AG04450 (cell line): ENCODE measurements at regions of chr11 and their contacts with region 1.

Region 1: GRCh38 chr11:61639816-61640443 is 40.3 kb upstream of the DAGLA start:
- DNase-seq: no peak
- H3K4me3 ChIP-seq: no peak overlapping the region
- H3K27ac ChIP-seq: no peak overlapping the region
- H3K27me3 ChIP-seq: peaks cover 23% of the 10 kb centered on the region
- CTCF ChIP-seq: no peak

Region 2: GRCh38 chr11:61477727-61478148 is 162.2 kb before region 1 on chr11:
- CTCF ChIA-PET with region 1: interaction called, 56 read pairs
- POLR2A ChIA-PET with region 1: no interaction called
- DNase-seq: no peak
- H3K4me3 ChIP-seq: no peak overlapping the region
- H3K27ac ChIP-seq: no peak overlapping the region
- H3K27me3 ChIP-seq: peaks cover 15% of the 10 kb centered on the region
- CTCF ChIP-seq: peak; percentile 87

Region 3: DNA sequence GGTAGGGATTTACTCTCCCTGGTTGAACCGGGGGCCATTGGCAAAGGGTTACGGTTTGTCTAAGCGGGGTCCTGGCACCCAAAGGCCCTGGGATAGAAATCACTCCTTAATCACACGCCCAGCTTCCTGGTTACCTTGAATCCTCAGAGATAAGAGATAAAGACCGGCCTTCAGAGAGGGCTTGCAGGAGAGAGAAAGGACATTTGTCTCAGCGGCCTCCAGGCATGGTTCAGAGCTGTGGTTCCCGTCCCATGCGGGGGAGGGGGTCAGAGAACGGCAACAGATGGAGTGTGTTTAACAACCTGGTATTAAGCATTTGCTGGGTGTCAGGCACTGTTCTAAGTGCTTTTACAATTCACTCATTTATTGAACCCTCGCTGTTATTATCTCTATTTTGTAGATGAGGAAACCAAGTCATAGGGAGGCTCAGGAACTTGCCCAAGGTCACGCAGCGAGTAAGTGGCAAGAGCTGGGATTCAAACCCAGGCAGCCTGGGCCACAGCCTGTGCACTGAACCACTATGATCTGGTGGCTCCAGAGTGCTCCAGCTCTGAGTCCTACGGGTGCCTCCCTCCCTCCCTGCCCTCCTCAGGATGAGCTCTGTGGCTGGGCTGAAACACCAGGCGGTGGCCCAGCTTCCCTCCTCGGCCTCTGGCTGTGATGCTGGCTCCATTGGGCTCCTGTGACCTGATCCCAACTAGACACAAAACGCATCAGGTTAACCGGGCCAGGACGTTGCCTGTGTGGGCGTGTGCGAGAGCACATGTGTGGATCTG is 112.8 kb before region 1 on chr11:
- CTCF ChIA-PET with region 1: interaction called, 24 read pairs
- POLR2A ChIA-PET with region 1: no interaction called
- DNase-seq: no peak
- H3K4me3 ChIP-seq: no peak overlapping the region
- H3K27ac ChIP-seq: no peak overlapping the region
- H3K27me3 ChIP-seq: peaks cover 87% of the 10 kb centered on the region
- CTCF ChIP-seq: no peak

Region 4: GRCh38 chr11:61627567-61628445 is 12.1 kb before region 1 on chr11:
- CTCF ChIA-PET with region 1: interaction called, 38 read pairs
- POLR2A ChIA-PET with region 1: no interaction called
- DNase-seq: peak; percentile 50
- H3K4me3 ChIP-seq: no peak overlapping the region
- H3K27ac ChIP-seq: no peak overlapping the region
- H3K27me3 ChIP-seq: peaks cover 12% of the 10 kb centered on the region
- CTCF ChIP-seq: peak; percentile 93

Region 5: GRCh38 chr11:61733120-61733978 is 93.4 kb after region 1 on chr11:
- CTCF ChIA-PET with region 1: interaction called, 21 read pairs
- POLR2A ChIA-PET with region 1: no interaction called
- DNase-seq: peak; percentile 44
- H3K4me3 ChIP-seq: no peak overlapping the region
- H3K27ac ChIP-seq: no peak overlapping the region
- H3K27me3 ChIP-seq: no peaks in the 10 kb centered on the region
- CTCF ChIP-seq: peak; percentile 99